Gastrocnemius medialis (tissue), 4 donors: ENCODE measurements at regions of chr3 and their contacts with region 1.

Region 1: GRCh38 chr3:145767909-145768308 is 393.1 kb downstream of the PLOD2 start:
- DNase-seq: no peak
- ATAC-seq: no peak
- H3K4me3 ChIP-seq: no peak overlapping the region
- H3K27ac ChIP-seq: no peak overlapping the region
- H3K4me1 ChIP-seq: no peaks in the 10 kb centered on the region
- H3K27me3 ChIP-seq: no peaks in the 10 kb centered on the region
- CTCF ChIP-seq: no peak
- POLR2A ChIP-seq: no peak

Region 2: DNA sequence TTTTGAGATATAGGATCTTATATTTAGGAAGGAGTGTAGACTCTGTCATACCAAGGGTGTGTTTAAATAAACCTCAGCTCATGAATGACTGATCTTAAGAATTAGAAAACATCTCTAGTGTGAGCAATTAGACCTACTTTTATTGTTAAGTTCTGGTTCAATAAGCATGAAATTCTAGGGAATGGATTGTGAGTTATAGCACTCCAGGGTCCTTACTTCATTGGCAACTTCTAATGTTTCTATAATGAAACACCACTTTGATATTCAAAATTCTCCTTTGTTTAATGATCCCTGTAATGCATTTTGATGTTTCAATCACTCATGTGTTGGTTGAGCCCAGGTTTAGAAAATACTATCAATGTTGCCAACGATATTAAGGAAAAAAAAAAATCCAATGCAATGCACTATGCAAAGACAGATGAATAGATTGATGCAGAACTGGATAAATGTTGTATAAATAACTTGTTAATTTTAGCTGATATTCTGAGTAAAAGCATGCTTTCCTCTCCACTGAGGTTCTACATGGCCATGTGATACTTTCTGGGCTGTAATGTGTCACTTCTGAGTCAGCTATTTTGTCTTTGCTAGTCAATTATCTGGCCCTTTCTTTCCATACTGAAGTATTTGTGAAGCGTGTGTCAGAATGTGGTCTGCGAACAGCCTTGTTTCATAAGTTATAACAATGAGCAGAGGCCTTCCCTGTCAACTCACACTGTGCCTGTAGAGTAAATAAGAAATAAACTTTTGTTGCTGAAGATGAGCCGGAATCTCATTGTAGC is 642.8 kb before region 1 on chr3:
- in situ Hi-C with region 1: no loop called
- intact Hi-C with region 1: loop called (anchors 10 kb)
- DNase-seq: no peak
- ATAC-seq: no peak
- H3K4me3 ChIP-seq: no peak overlapping the region
- H3K27ac ChIP-seq: no peak overlapping the region
- H3K4me1 ChIP-seq: no peaks in the 10 kb centered on the region
- H3K27me3 ChIP-seq: no peaks in the 10 kb centered on the region
- CTCF ChIP-seq: no peak
- POLR2A ChIP-seq: no peak

Region 3: DNA sequence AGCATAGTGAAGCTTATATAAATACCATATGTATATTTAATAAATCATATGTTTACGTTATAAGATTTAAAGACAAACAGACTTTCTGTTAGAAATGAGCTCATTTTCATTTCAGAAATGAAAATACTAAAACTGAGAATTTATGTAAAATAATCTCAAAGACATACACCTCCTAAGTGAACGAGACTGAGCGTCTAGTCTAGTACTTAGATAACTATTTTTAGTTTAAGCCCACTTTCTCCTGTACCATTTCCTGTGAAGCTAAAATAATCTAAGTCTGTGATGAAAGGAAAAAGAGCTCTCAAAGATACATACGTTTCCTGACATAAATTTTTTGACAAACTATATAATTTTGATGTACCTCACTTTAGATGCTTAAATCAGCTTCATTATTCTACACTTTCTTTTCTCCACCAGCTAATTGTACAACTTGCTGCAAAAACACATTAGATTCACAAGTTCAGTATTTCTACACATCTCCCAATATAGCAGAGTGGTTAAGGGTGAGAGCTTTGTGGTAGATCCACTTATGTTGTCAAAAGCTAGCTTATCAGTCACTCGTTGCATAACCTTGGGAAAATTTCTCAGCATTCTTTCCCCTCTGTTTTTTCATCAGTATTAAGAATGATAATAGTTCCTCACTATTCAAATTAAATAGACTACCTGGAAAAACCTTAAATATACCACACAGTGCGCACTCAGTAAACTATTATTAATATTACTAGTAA is 309.9 kb before region 1 on chr3:
- in situ Hi-C with region 1: no loop called
- intact Hi-C with region 1: no loop called
- DNase-seq: no peak
- ATAC-seq: no peak
- H3K4me3 ChIP-seq: no peak overlapping the region
- H3K27ac ChIP-seq: no peak overlapping the region
- H3K4me1 ChIP-seq: no peaks in the 10 kb centered on the region
- H3K27me3 ChIP-seq: no peaks in the 10 kb centered on the region
- CTCF ChIP-seq: no peak
- POLR2A ChIP-seq: no peak